ENCODE measurements at regions of chr1 and their contacts with region 1.

Region 1: DNA sequence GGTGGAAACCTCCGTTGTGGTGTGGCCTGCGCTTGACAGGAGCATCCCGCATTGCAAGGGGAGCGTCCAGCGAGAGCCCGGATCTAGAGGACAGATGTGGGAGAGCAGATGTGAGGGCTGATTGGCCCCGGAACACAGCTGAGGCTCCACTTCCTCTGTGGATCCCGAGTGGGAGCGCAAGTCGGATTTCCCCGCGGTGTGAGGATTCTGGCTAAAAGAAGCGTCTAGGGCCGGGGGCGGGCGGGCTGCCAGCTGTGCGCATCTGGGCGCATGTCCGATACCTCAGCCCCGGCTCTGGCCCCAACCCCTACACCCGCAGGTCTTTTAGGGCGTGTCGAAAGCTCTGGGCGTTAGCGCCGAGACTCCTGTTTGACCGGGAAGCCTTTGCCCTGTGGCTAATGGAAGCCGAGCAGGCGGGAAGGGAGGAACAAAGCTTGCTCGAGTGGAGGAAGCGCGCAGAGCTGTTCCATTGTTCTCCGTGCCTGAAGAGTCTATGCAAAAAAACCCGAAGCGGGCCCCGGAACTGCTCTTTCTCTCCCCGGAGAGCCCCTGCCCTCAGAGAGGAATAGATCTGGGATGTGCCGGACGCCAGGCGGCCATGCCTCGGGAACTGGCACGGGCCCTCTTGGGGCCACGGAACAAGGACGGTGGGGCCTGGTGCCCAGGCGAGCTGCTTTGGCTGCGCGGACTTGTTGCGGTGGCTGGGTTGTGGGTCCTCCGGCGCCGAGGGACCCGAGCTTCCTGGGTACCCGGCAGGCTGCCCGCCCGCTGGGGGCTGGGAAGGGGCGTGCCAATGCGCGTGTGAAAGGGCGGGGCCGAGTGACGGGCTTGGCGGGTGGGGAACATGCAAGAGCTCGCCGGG is 111.1 kb downstream of the NAV1 start:
- DNase-seq: peak; percentile 72 to 99 (median 88)

Region 2: DNA sequence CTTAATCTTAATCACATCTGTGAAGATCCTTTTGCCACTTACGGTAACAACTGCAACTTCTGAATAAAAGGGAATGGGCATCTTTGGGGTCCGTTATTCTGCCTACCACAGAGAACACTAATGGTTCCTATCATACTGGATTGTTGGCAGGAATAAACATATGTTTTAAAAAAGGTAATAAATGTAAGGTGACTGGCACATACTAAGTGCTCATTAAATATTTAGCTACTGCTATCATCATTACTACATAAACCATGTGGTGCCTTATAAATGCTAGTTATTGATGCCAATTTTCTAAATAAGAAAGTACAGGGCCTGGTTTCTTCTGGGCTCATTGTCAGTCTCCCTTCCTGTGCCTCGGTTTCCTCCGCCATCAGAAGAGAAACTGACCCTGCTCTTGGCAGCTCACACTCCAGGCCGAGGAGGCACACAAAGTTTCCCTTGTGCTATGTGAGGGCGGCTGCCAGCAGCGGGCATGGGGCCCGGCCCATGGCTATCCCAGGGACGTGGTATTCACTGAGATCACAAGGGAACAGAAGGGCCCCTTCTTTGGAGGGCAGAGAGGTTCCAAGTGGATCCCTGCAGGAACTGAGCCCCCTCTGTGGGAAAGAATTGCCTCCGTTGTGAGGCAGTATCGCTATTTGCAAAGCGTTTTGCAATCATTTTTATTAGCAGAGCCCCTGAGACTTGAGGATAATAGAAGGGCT is 84.8 kb before region 1 on chr1:
- intact Hi-C with region 1: loop called (anchors 5 kb)
- DNase-seq: peak; percentile 83 to 98 (median 90)

Region 3: GRCh38 chr1:201696217-201696761 is 46.3 kb after region 1 on chr1:
- intact Hi-C with region 1: loop called (anchors 5 kb)
- DNase-seq: peak; percentile 59 to 95 (median 74)

Region 4: GRCh38 chr1:201766131-201766866 is 116.3 kb after region 1 on chr1:
- intact Hi-C with region 1: no loop called
- DNase-seq: no peak

Region 5: GRCh38 chr1:201850053-201850397 is 200.0 kb after region 1 on chr1:
- intact Hi-C with region 1: no loop called
- DNase-seq: no peak

Measured in posterior cingulate gyrus (tissue), 11 donors.